Endothelial cell of umbilical vein (primary cell): ENCODE measurements at regions of chr9 and their contacts with region 1.

Region 1: DNA sequence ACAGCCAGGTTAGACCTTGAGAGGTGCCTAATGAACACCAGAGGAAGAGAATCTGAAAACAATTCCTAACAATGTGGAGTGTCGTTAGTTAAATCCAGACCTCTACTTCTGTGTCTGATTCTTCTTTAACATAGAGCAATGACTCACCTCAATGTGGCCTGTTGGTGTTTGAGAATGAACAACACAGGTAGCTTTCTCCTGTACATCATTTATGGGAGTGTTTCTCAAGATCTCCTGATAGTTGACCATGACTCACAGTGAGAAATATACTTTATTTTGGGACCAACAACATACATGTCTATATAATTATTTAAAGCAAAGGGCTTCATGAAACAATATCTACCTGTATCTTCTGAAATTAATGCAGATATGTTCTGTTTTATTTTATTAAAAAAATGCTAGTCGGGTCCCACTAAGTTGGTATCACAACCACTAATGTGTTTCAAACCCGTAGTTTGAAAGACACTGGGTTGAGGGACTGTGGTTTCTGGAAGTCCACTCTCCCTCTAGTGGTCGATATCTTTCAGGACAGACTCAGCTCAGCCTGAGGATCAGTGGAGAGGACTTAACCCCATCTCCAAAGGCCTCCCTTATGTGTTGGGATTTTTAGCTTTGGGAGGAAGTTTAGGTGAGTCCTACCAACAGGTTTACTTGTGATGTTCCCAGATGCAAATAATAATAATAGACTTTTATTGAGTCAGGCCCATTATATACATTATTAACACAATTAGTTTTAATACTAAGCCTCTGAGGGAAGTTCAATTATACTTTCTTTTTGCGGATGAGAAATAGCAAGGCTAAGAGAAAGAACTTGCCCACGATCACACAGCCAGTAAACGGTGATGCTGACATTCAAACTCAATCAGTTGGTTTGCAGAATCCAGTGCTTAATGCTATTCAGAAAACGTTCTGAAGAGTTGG is 70.0 kb upstream of the KLF9 start:
- DNase-seq: peak; percentile 81
- H3K4me3 ChIP-seq: no peak overlapping the region
- H3K27ac ChIP-seq: no peak overlapping the region
- H3K4me1 ChIP-seq: peaks cover 23% of the 10 kb centered on the region
- H3K27me3 ChIP-seq: no peaks in the 10 kb centered on the region
- CTCF ChIP-seq: peak; percentile 68 to 89
- POLR2A ChIP-seq: no peak

Region 2: DNA sequence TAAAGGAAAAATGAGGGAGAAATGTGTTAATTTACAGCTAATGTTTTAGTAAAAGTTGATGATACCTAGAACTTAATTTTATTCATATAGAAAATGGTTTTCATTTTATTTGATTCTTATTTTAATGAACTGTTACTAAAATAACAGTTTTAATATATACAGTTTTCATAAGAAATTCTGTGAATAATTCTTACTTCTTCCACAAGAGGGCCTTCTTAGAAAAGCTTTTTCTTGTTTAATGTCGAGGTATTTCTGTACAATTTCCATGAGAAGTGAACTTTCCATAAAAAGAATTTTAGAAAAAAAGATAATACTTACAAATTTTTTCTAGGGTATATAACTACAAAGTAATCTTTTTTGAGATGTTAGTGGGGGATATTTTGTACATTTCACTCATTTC is 143.9 kb before region 1 on chr9:
- CTCF ChIA-PET with region 1: interaction called, 19 read pairs
- POLR2A ChIA-PET with region 1: no interaction called
- dilution Hi-C with region 1: no loop called
- intact Hi-C with region 1: loop called (anchors 1 kb)
- DNase-seq: peak; percentile 40
- H3K4me3 ChIP-seq: no peak overlapping the region
- H3K27ac ChIP-seq: no peak overlapping the region
- H3K4me1 ChIP-seq: no peaks in the 10 kb centered on the region
- H3K27me3 ChIP-seq: no peaks in the 10 kb centered on the region
- CTCF ChIP-seq: peak in 1 of 2 donors; percentile 4
- POLR2A ChIP-seq: no peak

Region 3: GRCh38 chr9:70406434-70406862 is 78.0 kb before region 1 on chr9:
- CTCF ChIA-PET with region 1: interaction called, 11 read pairs
- POLR2A ChIA-PET with region 1: no interaction called
- dilution Hi-C with region 1: no loop called
- intact Hi-C with region 1: no loop called
- DNase-seq: no peak
- H3K4me3 ChIP-seq: no peak overlapping the region
- H3K27ac ChIP-seq: peak overlapping the region; percentile 66
- H3K4me1 ChIP-seq: peaks cover 32% of the 10 kb centered on the region
- H3K27me3 ChIP-seq: no peaks in the 10 kb centered on the region
- CTCF ChIP-seq: no peak
- POLR2A ChIP-seq: no peak

Region 4: GRCh38 chr9:70438341-70438928 is 46.0 kb before region 1 on chr9:
- CTCF ChIA-PET with region 1: interaction called, 15 read pairs
- POLR2A ChIA-PET with region 1: no interaction called
- dilution Hi-C with region 1: no loop called
- intact Hi-C with region 1: loop called (anchors 1 kb)
- DNase-seq: peak; percentile 93
- H3K4me3 ChIP-seq: no peak overlapping the region
- H3K27ac ChIP-seq: peak overlapping the region; percentile 71
- H3K4me1 ChIP-seq: peaks cover 48% of the 10 kb centered on the region
- H3K27me3 ChIP-seq: no peaks in the 10 kb centered on the region
- CTCF ChIP-seq: no peak
- POLR2A ChIP-seq: peak; percentile 61

Region 5: DNA sequence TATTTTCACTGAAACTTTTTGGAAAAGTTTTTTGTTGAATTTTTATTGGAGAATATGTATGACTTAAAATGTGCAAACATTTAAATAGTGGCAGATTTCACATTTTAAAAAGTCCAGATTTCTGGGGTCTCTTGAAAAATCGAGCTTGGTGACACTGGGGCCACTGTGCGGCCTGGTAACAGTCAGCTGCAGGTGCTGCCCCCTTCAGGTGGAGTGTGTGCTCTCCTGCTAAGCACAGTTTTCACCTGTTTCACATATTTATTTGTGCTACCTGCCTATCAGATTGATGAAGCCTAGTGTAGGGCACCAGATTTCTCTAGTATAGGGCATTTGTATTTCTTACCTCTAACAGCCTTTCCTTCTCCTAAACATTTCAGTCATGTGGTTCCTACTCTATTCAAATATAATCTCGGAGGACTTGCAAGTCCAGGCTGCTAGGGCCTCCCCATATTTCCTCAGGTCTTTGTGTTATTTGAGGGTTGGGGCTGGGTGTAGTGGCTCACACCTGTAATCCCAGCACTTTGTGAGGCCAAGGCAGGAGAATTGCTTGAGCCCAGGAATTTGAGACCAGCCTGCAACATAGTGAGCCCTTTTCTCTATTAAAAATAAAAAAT is 25.8 kb after region 1 on chr9:
- CTCF ChIA-PET with region 1: interaction called, 11 read pairs
- POLR2A ChIA-PET with region 1: no interaction called
- dilution Hi-C with region 1: no loop called
- intact Hi-C with region 1: no loop called
- DNase-seq: peak; percentile 46
- H3K4me3 ChIP-seq: no peak overlapping the region
- H3K27ac ChIP-seq: no peak overlapping the region
- H3K4me1 ChIP-seq: no peaks in the 10 kb centered on the region
- H3K27me3 ChIP-seq: no peaks in the 10 kb centered on the region
- CTCF ChIP-seq: peak; percentile 64 to 68
- POLR2A ChIP-seq: no peak